ENCODE measurements at regions of chrX and their contacts with region 1.

Region 1: DNA sequence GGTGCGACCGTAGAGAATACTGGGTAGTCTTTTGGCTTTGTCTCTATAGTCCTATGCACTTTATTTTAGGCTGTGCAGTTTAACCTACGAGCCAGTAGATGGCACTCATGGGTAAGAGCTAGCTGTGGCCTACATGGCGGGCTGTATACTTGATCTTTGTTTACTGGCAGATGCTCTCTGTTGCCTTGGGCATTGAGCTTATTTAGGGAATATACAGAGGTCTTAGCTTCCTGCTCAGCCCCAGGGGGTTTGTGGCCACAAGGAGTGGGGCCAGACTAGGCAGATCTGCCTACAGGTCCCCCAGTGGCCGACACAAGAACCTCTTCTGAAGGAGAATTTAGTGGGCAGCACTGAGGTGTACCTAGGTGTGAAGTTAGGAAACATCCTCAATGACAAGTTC is 227.6 kb upstream of the HDX start:
- DNase-seq: peak in 2 of 10 donors; percentile 20 to 27
- H3K4me3 ChIP-seq: no peak overlapping the region
- H3K27ac ChIP-seq: no peak overlapping the region
- H3K27me3 ChIP-seq: peaks cover 0 to 57% (median 6%) of the 10 kb centered on the region in 45 donors
- CTCF ChIP-seq: peak in 55 of 56 donors; percentile 30 to 76 (median 59)

Region 2: DNA sequence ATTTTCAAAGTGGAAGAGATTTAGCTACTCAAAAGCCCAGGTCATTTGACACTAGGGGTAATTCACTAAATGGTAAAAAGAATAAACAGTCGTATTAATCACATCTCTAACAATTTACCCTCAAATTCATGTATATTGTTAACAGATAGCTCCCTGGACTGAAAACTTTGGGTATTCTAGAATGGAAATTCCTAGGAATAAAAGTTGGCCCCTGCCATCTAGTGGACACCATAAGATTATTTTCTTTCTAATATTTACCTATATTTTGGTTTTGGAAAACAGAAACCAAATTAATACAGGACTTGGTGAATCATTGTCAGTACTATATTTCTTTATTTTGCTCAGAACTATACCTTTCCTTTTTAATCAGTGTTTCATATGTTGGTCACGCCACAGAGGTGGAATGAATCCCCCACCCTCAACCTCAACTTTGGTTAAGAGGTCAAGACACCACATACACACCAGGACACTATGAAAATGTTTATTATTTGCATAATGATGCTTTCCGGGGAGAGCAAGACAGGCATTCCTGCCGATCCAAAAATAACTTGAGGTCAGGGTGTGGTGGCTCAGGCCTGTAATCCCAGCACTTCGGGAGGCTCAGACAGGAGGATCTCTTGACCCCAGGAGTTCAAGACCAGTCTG is 177.6 kb after region 1 on chrX:
- intact Hi-C with region 1: loop called in 1 of 2 experiments (anchors 5 kb)
- DNase-seq: no peak
- H3K4me3 ChIP-seq: no peak overlapping the region
- H3K27ac ChIP-seq: no peak overlapping the region
- H3K27me3 ChIP-seq: peaks cover 0 to 73% (median 10%) of the 10 kb centered on the region in 45 donors
- CTCF ChIP-seq: peak in 42 of 56 donors; percentile 9 to 65 (median 34)

Region 3: GRCh38 chrX:85052636-85053343 is 323.0 kb after region 1 on chrX:
- intact Hi-C with region 1: loop called in 1 of 2 experiments (anchors 5 kb)
- DNase-seq: no peak
- H3K4me3 ChIP-seq: no peak overlapping the region
- H3K27ac ChIP-seq: peak overlapping the region in 5 of 59 donors; percentile 10 to 69 (median 17)
- H3K27me3 ChIP-seq: peaks cover 0 to 45% (median 0%) of the 10 kb centered on the region in 45 donors
- CTCF ChIP-seq: peak in 51 of 56 donors; percentile 16 to 63 (median 39)